ENCODE measurements at regions of chr18 and their contacts with region 1.

Region 1: DNA sequence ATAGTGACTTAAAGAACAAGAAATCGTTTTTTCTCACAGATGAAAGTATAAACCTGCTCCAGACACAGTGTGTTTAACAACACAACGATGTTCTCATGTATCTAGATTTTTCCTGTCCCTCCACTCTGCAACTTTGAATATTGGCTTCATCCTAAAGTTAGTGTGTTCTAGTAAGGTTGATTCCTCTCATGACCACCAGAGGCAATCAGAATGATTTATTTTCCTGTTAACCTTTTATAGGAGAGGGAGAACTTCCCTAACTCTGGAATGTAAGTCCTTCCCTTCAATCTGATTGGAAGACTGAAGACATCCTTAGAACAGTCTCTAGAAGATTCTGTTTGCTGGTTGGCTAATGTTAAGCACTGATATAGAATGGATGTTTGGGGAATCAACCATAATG is 41.0 kb upstream of the TAF4B start:
- DNase-seq: no peak
- ATAC-seq: no peak
- H3K4me3 ChIP-seq: no peak overlapping the region
- H3K4me3 Mint-ChIP-seq: no peak overlapping the region
- H3K27ac ChIP-seq: no peak overlapping the region
- H3K27ac Mint-ChIP-seq: no peak overlapping the region
- H3K4me1 ChIP-seq: peaks cover 1% of the 10 kb centered on the region
- H3K4me1 Mint-ChIP-seq: peaks cover 6 to 15% of the 10 kb centered on the region in 2 donors
- H3K27me3 ChIP-seq: no peaks in the 10 kb centered on the region
- H3K27me3 Mint-ChIP-seq: no peaks in the 10 kb centered on the region
- CTCF ChIP-seq: no peak

Region 2: DNA sequence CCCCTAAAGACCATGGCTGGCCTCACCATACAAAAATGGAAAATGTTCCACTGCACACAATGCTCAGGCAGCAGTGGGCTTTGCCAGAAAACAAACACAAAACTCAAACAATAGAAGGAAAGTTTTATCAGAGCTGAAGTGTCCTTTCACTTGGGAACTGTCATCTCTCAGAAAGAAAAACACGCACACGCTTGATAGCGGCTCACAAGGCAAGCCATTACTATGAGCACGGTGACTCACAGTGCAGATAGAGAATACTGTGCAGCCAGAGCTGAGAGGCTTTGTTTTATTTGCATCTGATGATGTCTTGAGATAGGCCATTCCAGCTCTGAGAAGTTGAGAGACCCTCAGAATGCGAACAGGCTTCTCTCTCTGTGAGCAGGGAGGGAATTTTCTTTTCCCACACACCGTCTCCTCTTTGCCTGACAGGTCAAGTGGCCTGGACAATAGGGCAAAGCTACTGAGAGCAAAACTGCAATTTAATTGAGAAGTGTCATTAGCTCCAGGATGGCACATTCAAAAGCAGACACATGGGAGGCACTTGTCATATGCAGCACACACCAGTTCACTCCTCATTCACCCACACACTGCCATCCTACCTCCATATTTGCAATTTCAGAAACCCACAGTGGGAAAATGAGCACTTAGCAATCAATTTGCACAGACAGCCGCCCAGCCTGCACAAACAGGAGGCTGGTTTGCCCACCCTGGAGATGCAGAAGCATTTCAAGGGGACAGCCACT is 331.4 kb before region 1 on chr18:
- intact Hi-C with region 1: no loop called
- DNase-seq: no peak
- ATAC-seq: no peak
- H3K4me3 ChIP-seq: no peak overlapping the region
- H3K4me3 Mint-ChIP-seq: no peak overlapping the region
- H3K27ac ChIP-seq: no peak overlapping the region
- H3K27ac Mint-ChIP-seq: no peak overlapping the region
- H3K4me1 ChIP-seq: no peaks in the 10 kb centered on the region
- H3K4me1 Mint-ChIP-seq: peaks cover 0 to 3% of the 10 kb centered on the region in 2 donors
- H3K27me3 ChIP-seq: no peaks in the 10 kb centered on the region
- H3K27me3 Mint-ChIP-seq: peaks cover 0 to 6% of the 10 kb centered on the region in 2 donors
- CTCF ChIP-seq: no peak

Region 3: GRCh38 chr18:26226229-26227005 is 41.1 kb after region 1 on chr18 and contains the start of gene TAF4B:
- intact Hi-C with region 1: loop called (anchors 5 kb)
- DNase-seq: peak; percentile 72 to 95
- ATAC-seq: peak; percentile 80 to 85 (median 84)
- H3K4me3 ChIP-seq: peak within 1 kb of the TSS; percentile 58
- H3K4me3 Mint-ChIP-seq: peak within 1 kb of the TSS; percentile 95
- H3K27ac ChIP-seq: peak within 1 kb of the TSS; percentile 69
- H3K27ac Mint-ChIP-seq: peak within 1 kb of the TSS; percentile 65 to 86
- H3K4me1 ChIP-seq: peaks cover 8% of the 10 kb centered on the region
- H3K4me1 Mint-ChIP-seq: peaks cover 16 to 24% of the 10 kb centered on the region in 2 donors
- H3K27me3 ChIP-seq: no peaks in the 10 kb centered on the region
- H3K27me3 Mint-ChIP-seq: peaks cover 21 to 22% of the 10 kb centered on the region in 2 donors
- CTCF ChIP-seq: no peak
- total RNA-seq, gene TAF4B: 1.5 to 3.3 (median 1.7) TPM

Measured in natural killer cell (primary cell).